HCT116 (cell line): ENCODE measurements at regions of chr16 and their contacts with region 1.

Region 1: GRCh38 chr16:83952940-83953795 is at the start of gene OSGIN1:
- DNase-seq: peak; percentile 93
- ATAC-seq: peak; percentile 82
- H3K4me3 ChIP-seq: peak within 1 kb of the TSS; percentile 66 to 77
- H3K27ac ChIP-seq: peak within 1 kb of the TSS; percentile 88
- H3K4me1 ChIP-seq: peaks cover 20 to 31% of the 10 kb centered on the region in 2 experiments
- H3K27me3 ChIP-seq: no peaks in the 10 kb centered on the region
- CTCF ChIP-seq: no peak
- POLR2A ChIP-seq: peak; percentile 82
- RAD21 ChIP-seq: no peak
- total RNA-seq, gene OSGIN1: 19.8 TPM

Region 2: GRCh38 chr16:83826146-83826913 is 126.8 kb before region 1 on chr16:
- CTCF ChIA-PET with region 1: interaction called, 4 read pairs
- POLR2A ChIA-PET with region 1: interaction called, 3 read pairs
- RAD21 ChIA-PET with region 1: no interaction called
- intact Hi-C with region 1: loop called (anchors 5 kb)
- DNase-seq: peak; percentile 64
- ATAC-seq: peak; percentile 94
- H3K4me3 ChIP-seq: peak overlapping the region in 1 of 2 experiments; percentile 8; a peak in 1 of 4 replicates
- H3K27ac ChIP-seq: no peak overlapping the region
- H3K4me1 ChIP-seq: peaks cover 6 to 18% of the 10 kb centered on the region in 2 experiments; a peak in 3 of 4 replicates
- H3K27me3 ChIP-seq: no peaks in the 10 kb centered on the region
- CTCF ChIP-seq: peak; percentile 94 to 99 (median 97)
- POLR2A ChIP-seq: no peak
- RAD21 ChIP-seq: peak; percentile 99

Region 3: DNA sequence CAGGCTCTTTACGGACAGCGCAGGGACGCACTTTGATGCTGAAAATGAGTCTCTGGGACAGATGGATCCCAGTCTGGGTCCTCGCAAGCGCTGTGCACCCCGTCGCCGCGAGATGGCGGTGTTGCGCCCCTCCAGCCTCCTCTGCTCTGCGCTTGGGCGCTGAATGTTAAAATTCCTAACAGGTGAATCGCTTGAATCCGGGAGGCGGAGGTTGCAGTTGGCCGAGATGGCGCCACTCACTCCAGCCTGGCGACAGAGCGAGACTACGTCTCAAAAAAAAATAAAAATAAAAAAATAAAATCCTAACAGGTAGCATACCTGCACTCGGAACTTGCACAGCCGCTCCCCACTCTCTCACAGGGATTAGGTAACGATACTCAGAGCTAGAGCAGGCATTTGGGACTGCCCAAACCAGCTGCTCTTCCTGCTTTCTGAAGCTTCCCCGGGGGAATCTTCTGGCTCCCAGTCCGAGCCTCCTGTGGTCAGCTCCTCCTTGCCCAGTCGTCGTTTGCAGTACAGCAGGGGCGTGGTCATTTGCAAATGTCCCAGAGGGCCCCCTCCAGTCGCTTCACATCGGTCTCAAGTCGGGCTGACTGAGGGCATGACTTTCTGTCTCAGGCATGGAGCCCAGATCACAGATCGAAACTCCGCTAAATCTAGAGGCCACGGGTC is 26.3 kb before region 1 on chr16:
- CTCF ChIA-PET with region 1: interaction called, 11 read pairs
- POLR2A ChIA-PET with region 1: interaction called, 8 read pairs
- RAD21 ChIA-PET with region 1: interaction called, 3 to 4 read pairs
- intact Hi-C with region 1: loop called (anchors 1 kb)
- DNase-seq: peak; percentile 86
- ATAC-seq: peak; percentile 95
- H3K4me3 ChIP-seq: peak overlapping the region; percentile 52 to 58
- H3K27ac ChIP-seq: peak overlapping the region; percentile 63
- H3K4me1 ChIP-seq: peaks cover 7 to 26% of the 10 kb centered on the region in 2 experiments
- H3K27me3 ChIP-seq: no peaks in the 10 kb centered on the region
- CTCF ChIP-seq: peak; percentile 95 to 100 (median 99)
- POLR2A ChIP-seq: peak; percentile 30
- RAD21 ChIP-seq: peak; percentile 97

Region 4: DNA sequence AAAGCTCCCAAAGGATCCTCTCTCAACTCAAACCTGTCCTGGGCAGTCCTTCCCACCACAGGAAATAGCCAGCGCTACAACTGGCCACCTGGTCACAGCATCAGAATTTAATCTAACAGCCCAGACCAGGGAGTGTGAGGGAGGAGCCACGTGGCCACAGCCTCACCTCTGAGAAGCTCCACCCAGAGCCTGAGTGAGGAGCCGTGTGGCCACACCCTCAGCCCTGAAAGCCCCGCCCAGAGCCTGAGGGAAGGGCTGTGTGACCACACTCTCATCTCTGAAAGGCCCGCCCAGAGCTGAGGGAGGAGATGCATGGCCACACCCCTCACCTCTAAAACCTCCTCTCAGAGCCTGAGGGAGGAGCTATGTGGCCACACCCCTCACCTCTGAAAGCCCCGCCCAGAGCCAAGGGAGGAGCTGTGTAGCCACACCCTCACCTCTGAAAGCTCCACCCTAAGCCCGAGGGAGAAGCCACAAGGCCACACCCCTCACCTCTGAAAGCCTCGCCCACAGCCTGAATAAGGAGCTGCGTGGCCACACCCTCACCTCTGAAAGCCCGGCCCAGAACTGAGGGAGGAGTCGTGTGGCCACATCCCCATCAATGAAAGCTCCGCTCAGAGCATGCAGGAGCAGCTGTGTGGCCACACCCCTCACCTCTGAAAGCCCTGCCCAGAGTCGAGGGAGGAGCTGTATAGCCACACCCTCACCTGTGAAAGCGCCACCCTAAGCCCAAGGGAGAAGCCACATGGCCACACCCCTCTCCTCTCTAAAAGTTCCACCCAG is 60.8 kb after region 1 on chr16:
- CTCF ChIA-PET with region 1: interaction called, 15 read pairs
- POLR2A ChIA-PET with region 1: interaction called, 10 read pairs
- RAD21 ChIA-PET with region 1: interaction called, 3 read pairs
- intact Hi-C with region 1: no loop called
- DNase-seq: peak; percentile 100
- ATAC-seq: peak; percentile 87
- H3K4me3 ChIP-seq: no peak overlapping the region
- H3K27ac ChIP-seq: peak overlapping the region; percentile 45
- H3K4me1 ChIP-seq: peaks cover 11 to 21% of the 10 kb centered on the region in 2 experiments
- H3K27me3 ChIP-seq: no peaks in the 10 kb centered on the region
- CTCF ChIP-seq: no peak
- POLR2A ChIP-seq: no peak
- RAD21 ChIP-seq: no peak

Region 5: DNA sequence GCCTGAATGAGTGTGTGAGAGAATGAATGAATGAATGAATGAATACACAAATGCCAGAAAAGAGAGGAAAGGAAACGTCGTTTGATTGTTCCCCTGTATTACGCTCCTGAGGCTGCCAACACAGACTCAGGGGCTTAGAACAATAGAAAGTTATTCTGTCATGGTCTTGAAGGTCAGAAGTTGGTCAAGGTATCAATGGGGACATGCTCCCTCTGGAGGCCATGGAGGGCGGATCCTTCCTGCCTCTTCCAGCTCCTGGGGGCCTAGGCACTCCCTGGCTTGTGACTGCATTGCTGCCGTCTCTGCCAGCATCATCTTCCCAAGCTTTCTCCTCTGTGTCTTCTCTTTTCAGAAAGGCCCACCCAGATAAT is 90.9 kb after region 1 on chr16:
- CTCF ChIA-PET with region 1: interaction called, 10 read pairs
- POLR2A ChIA-PET with region 1: no interaction called
- RAD21 ChIA-PET with region 1: interaction called in 1 of 2 experiments, 7 read pairs
- intact Hi-C with region 1: loop called (anchors 2 kb)
- DNase-seq: peak; percentile 41
- ATAC-seq: peak; percentile 82
- H3K4me3 ChIP-seq: no peak overlapping the region
- H3K27ac ChIP-seq: no peak overlapping the region
- H3K4me1 ChIP-seq: peaks cover 2 to 5% of the 10 kb centered on the region in 2 experiments; a peak in 1 of 4 replicates
- H3K27me3 ChIP-seq: no peaks in the 10 kb centered on the region; the same call in 1 of the 2 replicates
- CTCF ChIP-seq: peak; percentile 67 to 80 (median 73); a peak in 5 of 6 replicates
- POLR2A ChIP-seq: no peak
- RAD21 ChIP-seq: peak; percentile 66

Region 6: DNA sequence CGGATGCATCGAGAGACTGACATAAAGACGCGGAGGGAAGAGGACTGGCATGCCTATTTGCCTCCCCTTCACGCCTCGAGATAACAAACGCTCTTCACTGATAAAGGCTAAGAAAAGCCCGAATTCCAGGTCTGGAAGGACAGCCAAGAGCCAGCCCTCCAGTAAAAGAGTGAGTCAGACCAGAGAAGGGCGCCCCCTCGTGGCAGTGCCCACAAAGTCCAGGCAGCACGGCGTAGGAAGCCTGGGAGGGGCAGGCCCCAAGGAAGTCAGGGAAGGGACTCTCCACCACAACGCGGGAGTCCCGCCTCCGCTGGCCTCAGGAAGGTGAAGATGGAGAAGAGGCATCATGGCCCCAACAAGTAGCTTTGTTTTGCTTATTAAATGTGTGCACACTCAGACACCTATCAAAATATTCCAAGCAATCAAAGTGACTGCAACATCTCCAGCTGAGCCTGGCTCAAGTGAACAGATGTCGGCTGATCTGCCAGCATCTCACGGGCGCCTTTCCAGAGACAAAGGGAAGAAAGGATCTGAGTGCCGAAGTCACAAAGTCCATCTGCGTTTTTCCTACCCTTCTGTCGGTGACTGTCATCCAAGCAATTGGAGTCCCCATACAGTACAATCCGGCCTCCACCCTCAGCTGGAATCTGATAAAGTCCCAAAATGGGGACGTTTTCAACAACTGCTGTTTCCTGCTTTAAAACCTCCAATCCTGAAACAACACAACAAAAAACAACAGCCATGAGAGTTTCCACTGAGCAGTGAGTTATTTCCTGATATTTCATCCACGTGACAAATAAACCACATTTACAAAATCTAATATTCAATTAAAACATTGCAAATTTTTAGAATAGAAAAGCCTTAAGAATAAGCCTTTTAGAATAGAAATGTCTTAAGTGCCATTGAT is 109.8 kb after region 1 on chr16:
- CTCF ChIA-PET with region 1: interaction called, 24 read pairs
- POLR2A ChIA-PET with region 1: interaction called, 4 read pairs
- RAD21 ChIA-PET with region 1: interaction called, 3 to 4 read pairs
- intact Hi-C with region 1: loop called (anchors 1 kb)
- DNase-seq: peak; percentile 52
- ATAC-seq: peak; percentile 99
- H3K4me3 ChIP-seq: no peak overlapping the region
- H3K27ac ChIP-seq: no peak overlapping the region
- H3K4me1 ChIP-seq: peaks cover 0 to 3% of the 10 kb centered on the region in 2 experiments; a peak in 1 of 4 replicates
- H3K27me3 ChIP-seq: no peaks in the 10 kb centered on the region
- CTCF ChIP-seq: peak; percentile 92 to 100 (median 98)
- POLR2A ChIP-seq: no peak
- RAD21 ChIP-seq: peak; percentile 78

Region 7: DNA sequence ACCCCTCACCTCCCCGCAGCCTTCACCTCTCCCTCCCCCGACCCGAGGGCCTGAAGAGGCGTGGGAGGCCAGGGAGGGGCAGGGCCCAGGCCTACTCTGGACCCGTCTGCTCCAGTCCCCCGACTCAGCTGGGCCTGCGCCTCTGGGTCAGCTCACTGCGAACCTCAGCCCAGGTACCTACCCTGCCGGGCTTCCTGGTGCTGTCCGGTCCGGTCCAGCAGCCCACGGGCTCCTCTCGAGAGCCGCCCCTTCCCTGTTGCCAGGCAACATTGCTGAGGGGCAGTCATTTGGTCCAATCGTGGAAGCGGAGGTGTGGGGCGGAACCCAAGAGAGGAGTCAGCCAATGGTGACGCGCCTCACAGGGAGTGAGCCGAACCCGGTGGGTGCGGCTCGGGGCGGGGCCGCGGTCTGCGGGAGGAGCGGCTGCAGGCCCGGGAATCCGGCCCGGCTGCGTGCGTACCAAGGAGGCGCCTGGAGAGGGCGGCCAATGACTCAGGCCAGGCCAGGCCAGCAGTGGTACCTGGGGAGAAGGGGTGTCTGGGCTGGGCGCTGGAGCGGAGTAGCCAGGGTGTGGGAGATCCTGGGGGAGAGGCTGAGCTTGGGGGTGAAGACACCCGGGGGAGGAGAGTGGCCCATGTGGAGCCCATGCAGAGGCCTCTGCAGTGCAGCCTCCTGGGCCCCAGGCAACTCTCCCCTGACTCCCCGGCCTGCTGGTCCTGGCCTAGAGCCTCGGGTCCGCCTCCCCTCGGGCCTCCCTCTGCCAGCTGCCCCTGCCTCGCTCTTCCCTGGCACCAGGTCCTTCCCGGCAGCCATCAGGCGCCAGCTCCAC is 551.5 kb after region 1 on chr16 and contains the start of gene MEAK7:
- CTCF ChIA-PET with region 1: interaction called, 6 read pairs
- POLR2A ChIA-PET with region 1: no interaction called
- RAD21 ChIA-PET with region 1: no interaction called
- intact Hi-C with region 1: loop called (anchors 10 kb)
- DNase-seq: peak; percentile 98
- ATAC-seq: peak; percentile 84
- H3K4me3 ChIP-seq: peak within 1 kb of the TSS; percentile 88 to 98
- H3K27ac ChIP-seq: peak within 1 kb of the TSS; percentile 82
- H3K4me1 ChIP-seq: peaks cover 54 to 69% of the 10 kb centered on the region in 2 experiments
- H3K27me3 ChIP-seq: no peaks in the 10 kb centered on the region
- CTCF ChIP-seq: no peak
- POLR2A ChIP-seq: peak; percentile 67
- RAD21 ChIP-seq: no peak
- total RNA-seq, gene MEAK7: 32.2 TPM